Posterior vena cava (tissue), 2 donors: ENCODE measurements at regions of chr16 and their contacts with region 1.

Region 1: DNA sequence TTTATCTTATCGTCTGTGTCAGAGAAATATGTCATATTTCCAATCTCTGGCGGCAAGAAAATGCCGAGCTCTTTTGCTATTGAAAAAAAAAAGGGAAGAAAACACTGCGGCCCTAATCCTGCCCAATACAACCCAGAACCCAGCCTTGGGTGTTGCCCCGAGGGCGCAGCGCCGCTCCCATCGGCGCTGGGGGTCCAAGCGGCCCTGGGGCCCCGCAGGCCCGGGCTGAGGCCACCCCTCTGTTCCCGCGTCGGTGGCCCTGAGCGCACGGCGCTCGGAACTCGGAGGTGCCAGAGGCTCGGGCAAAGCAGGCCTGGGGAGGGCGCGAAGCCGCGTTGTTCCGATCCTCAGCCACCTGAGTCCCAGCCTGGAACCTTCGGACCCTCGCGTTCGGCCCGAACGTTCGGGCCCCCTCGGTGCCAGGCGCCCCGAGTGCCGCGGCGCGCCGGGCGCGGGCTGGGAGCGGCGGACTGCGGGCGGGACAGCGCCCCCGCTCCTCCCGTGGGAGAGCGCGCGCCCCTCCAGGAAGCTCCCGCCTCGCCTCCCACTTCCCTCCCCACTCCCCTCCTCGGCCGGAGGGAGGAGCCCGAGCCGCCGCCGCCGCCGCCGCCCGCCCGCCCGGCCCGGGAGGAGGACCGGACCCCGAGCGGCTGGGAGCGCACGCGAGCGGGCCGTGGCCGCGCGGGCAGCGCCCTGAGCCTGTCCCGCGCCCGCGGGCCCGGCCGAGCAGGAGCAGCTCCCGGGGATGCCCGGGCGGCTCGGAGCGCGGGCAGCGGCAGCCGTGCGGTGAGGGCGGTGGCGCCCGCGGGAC is at the start of gene CPNE2:
- DNase-seq: no peak
- total RNA-seq, gene CPNE2: 26.7 to 28.4 TPM

Region 2: GRCh38 chr16:57152096-57153093 is 60.2 kb after region 1 on chr16:
- intact Hi-C with region 1: loop called in 1 of 2 experiments (anchors 10 kb)
- DNase-seq: no peak

Region 3: GRCh38 chr16:57185944-57186871 is 94.0 kb after region 1 on chr16 and contains the starts of genes PSME3IP1 and RSPRY1:
- intact Hi-C with region 1: no loop called
- DNase-seq: peak; percentile 99
- total RNA-seq, gene PSME3IP1: 56.0 to 56.1 TPM
- total RNA-seq, gene RSPRY1: 26.8 to 27.6 TPM